CD4-positive, alpha-beta memory T cell (primary cell): ENCODE measurements at regions of chr5 and their contacts with region 1.

Region 1: GRCh38 chr5:75511435-75512384 is at the starts of genes CERT1 and POLK:
- DNase-seq: peak; percentile 92 to 97 (median 94)
- H3K4me3 ChIP-seq: peak within 1 kb of the TSS; percentile 54 to 81
- H3K4me3 Mint-ChIP-seq: peak within 1 kb of the TSS; percentile 90 to 97 (median 96)
- H3K27ac ChIP-seq: peak within 1 kb of the TSS; percentile 76
- H3K27ac Mint-ChIP-seq: peak within 1 kb of the TSS; percentile 94 to 98 (median 96)
- H3K4me1 ChIP-seq: peaks cover 44% of the 10 kb centered on the region
- H3K4me1 Mint-ChIP-seq: peaks cover 39 to 65% (median 49%) of the 10 kb centered on the region in 4 donors
- H3K27me3 ChIP-seq: no peaks in the 10 kb centered on the region
- H3K27me3 Mint-ChIP-seq: no peaks in the 10 kb centered on the region
- total RNA-seq, gene CERT1: 43.8 to 49.7 TPM
- total RNA-seq, gene POLK: 30.0 to 30.4 TPM

Region 2: DNA sequence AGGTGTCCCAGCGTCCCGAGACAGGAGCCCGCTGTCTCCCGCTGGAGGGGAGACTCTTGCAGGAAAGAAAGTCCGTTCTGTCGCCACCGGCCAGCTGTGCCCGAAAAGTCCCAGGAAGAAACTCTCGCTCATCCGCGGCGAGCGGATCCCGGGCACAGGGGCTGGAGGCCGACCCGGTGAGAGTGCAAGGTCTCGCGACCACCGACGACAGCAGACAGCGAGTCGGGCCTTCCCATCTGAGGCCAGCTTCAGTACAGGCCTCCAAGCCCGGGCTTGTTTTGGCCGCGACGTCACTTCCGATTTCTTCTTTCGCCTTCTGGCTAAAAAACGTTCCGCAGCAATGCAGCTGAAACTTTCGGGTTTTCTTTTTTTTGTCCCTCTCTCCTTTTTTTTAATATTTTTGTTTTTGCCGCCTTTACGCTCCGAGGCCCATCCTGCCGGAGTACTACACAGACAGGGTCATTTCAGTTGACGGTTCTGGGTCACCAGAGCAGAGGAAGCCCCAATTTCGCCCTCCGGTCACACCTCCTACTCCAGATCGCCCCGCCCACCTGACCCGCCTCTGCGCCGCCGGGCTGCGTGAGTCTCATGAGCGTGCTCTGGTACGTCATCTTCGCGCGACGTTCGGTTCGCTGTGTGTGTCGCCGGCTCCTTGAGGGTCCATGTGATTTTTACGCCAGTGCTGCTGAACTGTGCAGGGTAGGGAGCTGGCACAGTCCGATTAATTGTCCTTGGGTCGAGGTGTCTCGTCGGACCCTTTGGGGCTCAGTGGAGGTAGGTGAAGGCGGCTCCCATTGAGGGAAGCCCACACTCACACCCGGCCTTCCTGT is 1946.4 kb before region 1 on chr5 and contains the starts of genes ANKRA2 and UTP15:
- CTCF ChIA-PET with region 1: no interaction called
- POLR2A ChIA-PET with region 1: no interaction called
- intact Hi-C with region 1: loop called (anchors 10 kb)
- DNase-seq: peak; percentile 96 to 98 (median 97)
- H3K4me3 ChIP-seq: peak within 1 kb of the TSS; percentile 45 to 83
- H3K4me3 Mint-ChIP-seq: peak within 1 kb of the TSS; percentile 95 to 100 (median 99)
- H3K27ac ChIP-seq: peak within 1 kb of the TSS; percentile 99
- H3K27ac Mint-ChIP-seq: peak within 1 kb of the TSS; percentile 98 to 100 (median 99)
- H3K4me1 ChIP-seq: peaks cover 35% of the 10 kb centered on the region
- H3K4me1 Mint-ChIP-seq: peaks cover 26 to 53% (median 39%) of the 10 kb centered on the region in 4 donors
- H3K27me3 ChIP-seq: no peaks in the 10 kb centered on the region
- H3K27me3 Mint-ChIP-seq: no peaks in the 10 kb centered on the region
- total RNA-seq, gene ANKRA2: 51.9 to 59.4 TPM
- total RNA-seq, gene UTP15: 22.6 to 22.7 TPM

Region 3: DNA sequence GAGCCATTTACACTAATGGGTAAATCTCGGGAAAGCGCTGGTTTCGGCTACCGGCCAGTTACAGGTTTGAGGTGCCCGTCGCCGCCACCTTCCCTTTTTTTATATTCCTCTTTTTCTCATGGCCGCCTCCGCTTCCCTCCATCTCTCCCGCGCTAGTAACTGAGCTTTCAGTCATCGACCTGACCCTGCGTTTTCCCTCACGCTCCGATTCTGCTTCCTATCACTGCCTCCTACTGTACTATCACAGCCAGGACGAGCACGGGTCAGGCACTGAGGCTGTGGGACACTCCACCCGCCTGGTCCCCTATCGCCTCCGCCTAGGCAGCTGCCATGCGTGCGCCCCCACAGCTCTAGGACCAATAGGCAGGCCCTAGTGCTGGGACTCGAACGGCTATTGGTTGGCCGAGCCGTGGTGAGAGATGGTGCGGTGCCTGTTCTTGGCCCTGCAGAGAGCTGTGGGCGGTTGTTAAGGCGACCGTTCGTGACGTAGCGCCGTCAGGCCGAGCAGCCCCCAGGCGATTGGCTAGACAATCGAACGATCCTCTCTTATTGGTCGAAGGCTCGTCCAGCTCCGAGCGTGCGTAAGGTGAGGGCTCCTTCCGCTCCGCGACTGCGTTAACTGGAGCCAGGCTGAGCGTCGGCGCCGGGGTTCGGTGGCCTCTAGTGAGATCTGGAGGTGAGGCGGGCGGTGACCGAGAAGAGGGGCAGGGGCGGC is 174.9 kb before region 1 on chr5 and contains the start of gene HMGCR:
- CTCF ChIA-PET with region 1: no interaction called
- POLR2A ChIA-PET with region 1: interaction called, 11 read pairs
- intact Hi-C with region 1: loop called (anchors 1 kb)
- DNase-seq: peak; percentile 95 to 98 (median 97)
- H3K4me3 ChIP-seq: peak within 1 kb of the TSS; percentile 90
- H3K4me3 Mint-ChIP-seq: no peak within 1 kb of the TSS
- H3K27ac ChIP-seq: peak within 1 kb of the TSS; percentile 72
- H3K27ac Mint-ChIP-seq: peak within 1 kb of the TSS in 1 of 7 donors; percentile 96
- H3K4me1 ChIP-seq: peaks cover 26% of the 10 kb centered on the region
- H3K4me1 Mint-ChIP-seq: peaks cover 27 to 39% (median 29%) of the 10 kb centered on the region in 4 donors
- H3K27me3 ChIP-seq: no peaks in the 10 kb centered on the region
- H3K27me3 Mint-ChIP-seq: no peaks in the 10 kb centered on the region
- total RNA-seq, gene HMGCR: 39.6 to 43.0 TPM

Region 4: GRCh38 chr5:75566710-75567309 is 55.1 kb after region 1 on chr5:
- CTCF ChIA-PET with region 1: no interaction called
- POLR2A ChIA-PET with region 1: no interaction called
- intact Hi-C with region 1: loop called (anchors 1 kb)
- DNase-seq: peak; percentile 14 to 62 (median 21)
- H3K4me3 ChIP-seq: no peak overlapping the region
- H3K4me3 Mint-ChIP-seq: peak overlapping the region; percentile 29 to 78 (median 56)
- H3K27ac ChIP-seq: peak overlapping the region; percentile 21
- H3K27ac Mint-ChIP-seq: peak overlapping the region in 6 of 7 donors; percentile 18 to 86 (median 49)
- H3K4me1 ChIP-seq: peaks cover 28% of the 10 kb centered on the region
- H3K4me1 Mint-ChIP-seq: peaks cover 18 to 52% (median 34%) of the 10 kb centered on the region in 4 donors
- H3K27me3 ChIP-seq: no peaks in the 10 kb centered on the region
- H3K27me3 Mint-ChIP-seq: no peaks in the 10 kb centered on the region

Region 5: GRCh38 chr5:75717082-75717922 is 205.6 kb after region 1 on chr5 and contains the start of gene POC5:
- CTCF ChIA-PET with region 1: no interaction called
- POLR2A ChIA-PET with region 1: interaction called, 6 read pairs
- intact Hi-C with region 1: loop called (anchors 1 kb)
- DNase-seq: peak; percentile 98 to 99 (median 98)
- H3K4me3 ChIP-seq: peak within 1 kb of the TSS; percentile 74 to 95
- H3K4me3 Mint-ChIP-seq: peak within 1 kb of the TSS; percentile 99 to 100 (median 100)
- H3K27ac ChIP-seq: peak within 1 kb of the TSS; percentile 74
- H3K27ac Mint-ChIP-seq: peak within 1 kb of the TSS; percentile 98 to 100 (median 99)
- H3K4me1 ChIP-seq: peaks cover 18% of the 10 kb centered on the region
- H3K4me1 Mint-ChIP-seq: peaks cover 29 to 43% (median 36%) of the 10 kb centered on the region in 4 donors
- H3K27me3 ChIP-seq: no peaks in the 10 kb centered on the region
- H3K27me3 Mint-ChIP-seq: no peaks in the 10 kb centered on the region
- total RNA-seq, gene POC5: 15.1 to 20.0 TPM